Sigmoid colon (tissue), 7 donors: ENCODE measurements at regions of chr10 and their contacts with region 1.

Region 1: GRCh38 chr10:121027371-121027770 is 176.2 kb downstream of the WDR11 start:
- DNase-seq: peak; percentile 74
- H3K4me3 ChIP-seq: no peak overlapping the region
- H3K27ac ChIP-seq: peak overlapping the region in 3 of 4 donors; percentile 54 to 73 (median 70)
- H3K4me1 ChIP-seq: peaks cover 0 to 55% (median 38%) of the 10 kb centered on the region in 4 donors
- H3K27me3 ChIP-seq: no peaks in the 10 kb centered on the region
- CTCF ChIP-seq: no peak
- EP300 ChIP-seq: peak in 2 of 4 donors; percentile 75 to 86
- POLR2A ChIP-seq: no peak

Region 2: DNA sequence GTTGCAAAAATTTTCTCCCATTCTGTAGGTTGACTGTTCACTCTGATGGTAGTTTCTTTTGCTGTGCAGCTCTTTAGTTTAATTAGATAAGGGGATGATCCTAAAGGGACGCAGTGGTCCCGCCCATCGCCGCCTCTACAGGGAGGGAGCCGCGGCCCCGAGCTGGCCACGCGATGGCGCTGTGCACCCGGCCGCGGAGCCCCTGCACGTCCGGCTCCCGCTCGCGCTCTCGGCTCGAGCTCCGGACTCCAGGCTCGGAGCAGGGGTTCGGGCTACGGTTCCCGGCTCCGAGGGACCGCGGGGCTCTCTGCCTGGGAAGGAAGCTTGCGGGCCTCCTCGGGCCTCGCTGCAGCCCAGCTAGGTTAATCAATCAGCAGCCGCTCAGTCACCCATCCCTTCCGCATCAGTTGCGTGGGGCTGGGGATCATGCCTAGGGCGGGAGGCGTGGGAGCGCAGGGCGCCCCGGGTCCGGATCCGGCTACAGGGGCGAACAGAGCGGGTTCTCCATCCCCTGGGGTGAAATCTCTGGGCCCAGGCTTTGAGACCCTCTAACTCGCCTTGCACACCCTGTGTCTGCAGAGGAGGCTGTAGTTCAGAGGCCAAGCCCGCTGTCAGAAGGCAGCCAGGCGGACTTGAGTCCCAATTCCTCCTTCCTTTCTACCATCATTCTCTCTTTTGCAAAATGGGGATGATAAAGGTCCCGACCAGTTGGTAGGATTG is 78.3 kb before region 1 on chr10:
- intact Hi-C with region 1: loop called (anchors 5 kb)
- DNase-seq: peak; percentile 82
- H3K4me3 ChIP-seq: peak overlapping the region; percentile 12 to 50 (median 38)
- H3K27ac ChIP-seq: peak overlapping the region in 1 of 4 donors; percentile 45
- H3K4me1 ChIP-seq: peaks cover 0 to 27% (median 23%) of the 10 kb centered on the region in 4 donors
- H3K27me3 ChIP-seq: peaks cover 0 to 12% (median 0%) of the 10 kb centered on the region in 3 donors
- CTCF ChIP-seq: peak; percentile 70 to 96 (median 83)
- EP300 ChIP-seq: no peak
- POLR2A ChIP-seq: no peak

Region 3: GRCh38 chr10:120979435-120980278 is 47.7 kb before region 1 on chr10:
- intact Hi-C with region 1: loop called (anchors 5 kb)
- DNase-seq: no peak
- H3K4me3 ChIP-seq: peak overlapping the region; percentile 12 to 49 (median 42)
- H3K27ac ChIP-seq: peak overlapping the region in 3 of 4 donors; percentile 39 to 55 (median 41)
- H3K4me1 ChIP-seq: peaks cover 0 to 26% (median 22%) of the 10 kb centered on the region in 4 donors
- H3K27me3 ChIP-seq: no peaks in the 10 kb centered on the region
- CTCF ChIP-seq: no peak
- EP300 ChIP-seq: no peak
- POLR2A ChIP-seq: no peak